GM10248 (cell line): ENCODE measurements at regions of chr20 and their contacts with region 1.

Region 1: GRCh38 chr20:45771182-45771759 is 20.4 kb downstream of the WFDC3 start:
- DNase-seq: peak; percentile 80
- CTCF ChIP-seq: peak; percentile 92

Region 2: GRCh38 chr20:45293041-45294002 is 477.9 kb before region 1 on chr20:
- CTCF ChIA-PET with region 1: interaction called, 25 read pairs
- POLR2A ChIA-PET with region 1: no interaction called
- DNase-seq: peak; percentile 83
- CTCF ChIP-seq: peak; percentile 90

Region 3: GRCh38 chr20:45362804-45363610 is 408.3 kb before region 1 on chr20 and contains the start of gene SYS1:
- CTCF ChIA-PET with region 1: interaction called, 26 read pairs
- POLR2A ChIA-PET with region 1: interaction called, 5 read pairs
- DNase-seq: peak; percentile 96
- CTCF ChIP-seq: peak; percentile 74

Region 4: GRCh38 chr20:45436732-45437391 is 334.4 kb before region 1 on chr20:
- CTCF ChIA-PET with region 1: interaction called, 21 read pairs
- POLR2A ChIA-PET with region 1: interaction called, 7 read pairs
- DNase-seq: peak; percentile 86
- CTCF ChIP-seq: peak; percentile 86

Region 5: DNA sequence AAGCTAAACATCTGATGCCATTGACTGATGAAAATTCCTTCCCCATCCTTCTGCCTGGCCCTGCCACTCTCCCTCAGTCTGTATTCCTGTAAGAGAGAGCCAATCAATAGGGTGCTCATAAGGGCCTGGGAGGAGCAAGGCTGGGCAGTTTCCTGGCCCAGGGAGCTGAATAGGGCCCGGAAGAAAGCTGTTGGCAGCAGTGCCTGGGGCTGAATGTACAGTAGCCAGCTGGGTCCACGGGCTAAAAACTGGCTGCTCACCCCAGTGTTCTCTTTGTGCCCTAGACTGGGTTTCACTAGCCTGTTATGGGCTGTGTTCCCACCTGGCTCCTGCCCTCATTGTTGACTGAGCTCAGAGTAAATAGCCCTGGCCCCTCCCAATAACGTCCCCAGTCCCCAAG is 303.4 kb before region 1 on chr20:
- CTCF ChIA-PET with region 1: interaction called, 29 read pairs
- POLR2A ChIA-PET with region 1: no interaction called
- DNase-seq: no peak
- CTCF ChIP-seq: no peak

Region 6: GRCh38 chr20:45752746-45753145 is 18.5 kb before region 1 on chr20:
- CTCF ChIA-PET with region 1: interaction called, 24 read pairs
- POLR2A ChIA-PET with region 1: no interaction called
- DNase-seq: no peak
- CTCF ChIP-seq: no peak

Region 7: DNA sequence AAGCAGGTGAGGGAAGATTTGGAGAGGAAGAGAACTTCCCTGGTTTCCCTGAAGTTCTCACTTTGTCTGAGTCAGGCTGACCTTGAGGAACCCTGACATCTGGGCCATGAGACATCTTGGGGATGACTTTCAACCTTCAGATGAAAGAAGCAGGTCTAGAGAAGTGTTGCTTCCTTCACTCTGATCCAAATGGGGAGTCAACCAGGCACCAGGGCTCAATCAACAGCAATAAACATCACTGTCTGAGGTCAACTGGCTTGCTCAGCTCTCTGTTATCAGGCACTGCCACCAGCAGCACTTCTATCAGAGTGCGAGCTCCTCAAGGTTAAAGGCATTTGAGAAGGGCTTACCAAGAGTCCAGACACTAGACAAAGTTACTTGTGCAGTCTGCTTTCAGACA is 79.7 kb after region 1 on chr20:
- CTCF ChIA-PET with region 1: no interaction called
- POLR2A ChIA-PET with region 1: no interaction called
- DNase-seq: no peak
- CTCF ChIP-seq: no peak

Region 8: GRCh38 chr20:45910670-45911485 is 139.6 kb after region 1 on chr20:
- CTCF ChIA-PET with region 1: no interaction called
- POLR2A ChIA-PET with region 1: no interaction called
- DNase-seq: peak; percentile 100
- CTCF ChIP-seq: no peak